ENCODE measurements at regions of chr14 and their contacts with region 1.

Region 1: GRCh38 chr14:69726761-69727511 is 40.0 kb upstream of the SRSF5 start:
- DNase-seq: peak; percentile 88
- ATAC-seq: peak; percentile 96 to 97

Region 2: DNA sequence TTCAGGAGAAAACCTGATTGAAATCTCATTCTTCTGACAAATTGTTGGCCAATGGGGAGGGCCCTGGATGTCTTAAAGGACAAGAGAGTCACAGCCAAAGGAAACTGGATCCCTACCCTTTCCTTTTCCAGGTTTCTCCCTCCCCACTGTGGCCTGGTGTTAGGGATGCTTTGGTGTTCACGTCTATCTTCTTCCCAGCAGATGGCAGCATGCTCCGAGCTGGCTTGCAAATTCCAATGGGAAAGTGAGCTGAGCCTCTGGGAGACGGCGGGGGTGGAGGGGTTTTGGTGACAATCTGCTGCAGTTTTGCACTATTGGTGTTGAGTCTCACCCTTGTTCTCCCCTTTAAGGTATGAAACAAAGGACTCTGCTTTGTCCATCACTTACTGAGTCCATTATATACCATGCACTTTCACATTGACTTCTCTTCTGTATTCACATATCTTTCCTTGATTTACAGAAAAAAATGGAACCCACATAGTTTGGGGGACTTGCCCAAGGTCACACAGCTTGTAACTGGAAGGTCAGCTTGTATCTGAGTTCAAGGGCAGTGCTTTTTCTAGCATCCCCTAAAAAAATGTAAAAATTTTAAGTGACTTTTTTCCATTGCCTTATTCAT is 191.6 kb before region 1 on chr14:
- intact Hi-C with region 1: loop called in 1 of 2 experiments (anchors 5 kb)
- DNase-seq: peak; percentile 42
- ATAC-seq: peak; percentile 59 to 72

Region 3: GRCh38 chr14:69580009-69580577 is 146.8 kb before region 1 on chr14:
- intact Hi-C with region 1: loop called (anchors 1 to 2 kb)
- DNase-seq: peak; percentile 36
- ATAC-seq: peak; percentile 83 to 92

Region 4: DNA sequence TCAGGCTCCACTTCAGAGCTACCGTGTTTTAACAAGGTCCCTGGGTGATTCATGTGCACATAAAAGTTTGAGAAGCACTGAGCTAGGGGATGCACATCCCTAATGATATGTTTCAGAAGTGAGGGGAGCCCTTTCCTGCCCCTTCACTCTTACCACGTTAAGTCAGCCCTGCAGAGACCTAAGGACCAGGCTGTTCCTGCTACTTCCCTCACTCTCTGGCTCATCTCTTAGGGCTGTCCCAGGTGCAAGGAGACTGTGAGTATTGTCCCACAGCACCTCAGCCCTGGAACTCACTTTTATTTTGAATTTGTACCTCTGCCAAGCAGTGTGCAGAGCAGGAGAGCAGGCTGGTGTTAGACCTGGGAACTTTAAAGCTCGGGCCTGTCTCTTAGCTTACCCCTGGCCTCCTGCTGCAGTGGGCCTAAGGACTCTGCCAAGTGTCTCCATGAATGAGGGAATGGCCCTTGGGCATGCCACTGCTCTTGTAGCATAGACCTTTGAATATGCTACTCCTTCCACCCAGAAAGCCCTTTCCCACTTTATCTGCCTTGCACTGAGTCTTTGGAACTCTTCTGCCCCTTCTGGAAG is 126.5 kb before region 1 on chr14:
- intact Hi-C with region 1: loop called (anchors 5 kb)
- DNase-seq: no peak
- ATAC-seq: no peak

Measured in left cardiac atrium (tissue), 4 donors.